HCT116 (cell line): ENCODE measurements at regions of chr17 and their contacts with region 1.

Region 1: DNA sequence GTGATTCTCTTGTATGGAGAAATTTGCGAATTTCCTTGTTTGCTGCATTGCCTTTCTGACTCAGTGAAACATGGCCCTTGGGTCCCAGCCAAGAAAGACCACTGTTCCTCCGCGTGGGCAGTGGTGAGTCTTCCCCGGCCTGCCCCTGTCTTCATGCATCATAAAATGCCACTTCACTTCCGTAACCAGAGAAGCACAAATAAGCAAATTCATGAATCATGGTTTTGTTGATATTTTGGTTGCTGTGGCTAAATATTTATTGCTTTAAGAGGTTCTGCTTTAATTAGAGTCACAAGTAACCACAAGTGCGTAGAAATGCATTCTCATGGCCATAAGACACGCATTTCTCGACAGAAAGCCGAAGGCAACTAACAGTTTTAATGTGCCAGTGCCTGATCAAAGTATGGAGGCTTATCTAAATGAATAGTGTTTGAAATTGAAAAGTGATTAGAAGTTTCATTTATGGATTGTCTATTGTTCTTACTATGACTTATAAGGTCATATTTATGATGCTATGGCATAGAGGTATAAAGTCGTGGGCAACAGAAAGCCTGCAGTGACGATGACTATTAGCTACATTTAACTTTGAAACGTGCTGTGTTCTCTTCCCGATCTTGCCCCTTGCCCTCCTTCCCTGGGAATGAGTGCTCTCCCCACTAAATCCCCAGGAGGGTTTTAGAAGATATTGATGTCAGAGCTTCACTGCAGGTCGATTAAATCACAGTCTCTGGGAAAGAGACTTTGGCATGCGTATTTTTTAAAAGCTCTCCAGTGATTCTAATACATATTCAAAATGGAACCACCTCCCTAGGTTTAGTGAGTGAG is 76.0 kb downstream of the WIPI1 start:
- DNase-seq: peak; percentile 98
- ATAC-seq: peak; percentile 43
- H3K4me3 ChIP-seq: peak overlapping the region; percentile 7 to 25; a peak in 2 of 4 replicates
- H3K27ac ChIP-seq: peak overlapping the region; percentile 96
- H3K4me1 ChIP-seq: peaks cover 89 to 92% of the 10 kb centered on the region in 2 experiments
- H3K27me3 ChIP-seq: no peaks in the 10 kb centered on the region
- CTCF ChIP-seq: no peak
- POLR2A ChIP-seq: no peak
- RAD21 ChIP-seq: peak; percentile 32; the same call in 1 of the 2 replicates

Region 2: DNA sequence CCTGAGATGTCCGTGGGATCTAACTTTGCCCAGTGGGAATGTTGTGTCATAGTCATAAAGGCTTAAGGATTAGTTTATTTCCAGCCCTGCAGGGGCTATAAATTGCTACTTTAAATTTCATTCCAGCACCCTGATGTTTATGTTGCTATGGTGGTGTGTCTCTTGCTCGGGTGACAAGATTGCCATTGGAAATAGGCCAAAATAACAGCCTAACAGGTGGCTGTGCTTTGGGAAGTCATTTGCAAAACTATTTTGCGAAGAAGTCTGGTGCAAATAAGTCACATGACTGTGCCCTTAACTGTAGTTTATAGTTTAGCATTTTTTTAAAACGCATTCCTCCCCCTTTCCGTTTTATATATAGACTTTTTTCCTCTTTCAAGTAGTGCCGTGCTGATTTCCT is 981.1 kb before region 1 on chr17:
- CTCF ChIA-PET with region 1: no interaction called
- POLR2A ChIA-PET with region 1: no interaction called
- RAD21 ChIA-PET with region 1: no interaction called
- intact Hi-C with region 1: loop called (anchors 10 kb)
- DNase-seq: no peak
- ATAC-seq: no peak
- H3K4me3 ChIP-seq: no peak overlapping the region
- H3K27ac ChIP-seq: no peak overlapping the region
- H3K4me1 ChIP-seq: peaks cover 0 to 9% of the 10 kb centered on the region in 2 experiments; a peak in 2 of 4 replicates
- H3K27me3 ChIP-seq: no peaks in the 10 kb centered on the region
- CTCF ChIP-seq: no peak
- POLR2A ChIP-seq: no peak
- RAD21 ChIP-seq: no peak

Region 3: GRCh38 chr17:68291844-68292695 is 89.2 kb before region 1 on chr17:
- CTCF ChIA-PET with region 1: no interaction called
- POLR2A ChIA-PET with region 1: interaction called, 5 read pairs
- RAD21 ChIA-PET with region 1: no interaction called
- intact Hi-C with region 1: loop called (anchors 2 kb)
- DNase-seq: peak; percentile 63
- ATAC-seq: peak; percentile 77
- H3K4me3 ChIP-seq: peak overlapping the region; percentile 60 to 74
- H3K27ac ChIP-seq: peak overlapping the region; percentile 92
- H3K4me1 ChIP-seq: peaks cover 56 to 78% of the 10 kb centered on the region in 2 experiments
- H3K27me3 ChIP-seq: no peaks in the 10 kb centered on the region
- CTCF ChIP-seq: peak in 1 of 3 experiments; percentile 35; a peak in 1 of 6 replicates
- POLR2A ChIP-seq: peak; percentile 46
- RAD21 ChIP-seq: peak; percentile 70

Region 4: GRCh38 chr17:68314916-68315535 is 66.3 kb before region 1 on chr17:
- CTCF ChIA-PET with region 1: no interaction called
- POLR2A ChIA-PET with region 1: interaction called, 6 read pairs
- RAD21 ChIA-PET with region 1: no interaction called
- intact Hi-C with region 1: loop called (anchors 5 kb)
- DNase-seq: no peak
- ATAC-seq: peak; percentile 42
- H3K4me3 ChIP-seq: no peak overlapping the region
- H3K27ac ChIP-seq: no peak overlapping the region; the same call in 1 of the 2 replicates
- H3K4me1 ChIP-seq: peaks cover 57 to 77% of the 10 kb centered on the region in 2 experiments
- H3K27me3 ChIP-seq: no peaks in the 10 kb centered on the region
- CTCF ChIP-seq: no peak
- POLR2A ChIP-seq: no peak
- RAD21 ChIP-seq: no peak

Region 5: GRCh38 chr17:68398691-68399637 is 17.7 kb after region 1 on chr17:
- CTCF ChIA-PET with region 1: interaction called, 41 read pairs
- POLR2A ChIA-PET with region 1: interaction called, 17 read pairs
- RAD21 ChIA-PET with region 1: interaction called, 6 to 7 read pairs
- intact Hi-C with region 1: no loop called
- DNase-seq: peak; percentile 72
- ATAC-seq: peak; percentile 94
- H3K4me3 ChIP-seq: no peak overlapping the region
- H3K27ac ChIP-seq: peak overlapping the region; percentile 43
- H3K4me1 ChIP-seq: peaks cover 27 to 35% of the 10 kb centered on the region in 2 experiments
- H3K27me3 ChIP-seq: no peaks in the 10 kb centered on the region
- CTCF ChIP-seq: peak; percentile 97 to 99 (median 99)
- POLR2A ChIP-seq: no peak
- RAD21 ChIP-seq: peak; percentile 99

Region 6: GRCh38 chr17:68457539-68458259 is 76.4 kb after region 1 on chr17:
- CTCF ChIA-PET with region 1: no interaction called
- POLR2A ChIA-PET with region 1: no interaction called
- RAD21 ChIA-PET with region 1: no interaction called
- intact Hi-C with region 1: loop called (anchors 2 kb)
- DNase-seq: peak; percentile 98
- ATAC-seq: peak; percentile 86
- H3K4me3 ChIP-seq: peak overlapping the region; percentile 39 to 57
- H3K27ac ChIP-seq: no peak overlapping the region
- H3K4me1 ChIP-seq: peaks cover 21 to 39% of the 10 kb centered on the region in 2 experiments
- H3K27me3 ChIP-seq: no peaks in the 10 kb centered on the region
- CTCF ChIP-seq: no peak
- POLR2A ChIP-seq: no peak
- RAD21 ChIP-seq: no peak